ENCODE measurements at regions of chr3 and their contacts with region 1.

Region 1: GRCh38 chr3:188749010-188749617 is 422.7 kb upstream of the TPRG1 start:
- DNase-seq: no peak
- ATAC-seq: no peak
- H3K4me3 Mint-ChIP-seq: no peak overlapping the region
- H3K27ac Mint-ChIP-seq: peak overlapping the region; percentile 55
- H3K4me1 Mint-ChIP-seq: peaks cover 43% of the 10 kb centered on the region
- H3K27me3 Mint-ChIP-seq: no peaks in the 10 kb centered on the region
- CTCF ChIP-seq: no peak

Region 2: GRCh38 chr3:187919048-187919447 is 830.1 kb before region 1 on chr3:
- CTCF ChIA-PET with region 1: no interaction called
- POLR2A ChIA-PET with region 1: no interaction called
- intact Hi-C with region 1: loop called (anchors 2 kb)
- DNase-seq: peak; percentile 36
- ATAC-seq: peak; percentile 89
- H3K4me3 Mint-ChIP-seq: peak overlapping the region; percentile 77
- H3K27ac Mint-ChIP-seq: peak overlapping the region; percentile 86
- H3K4me1 Mint-ChIP-seq: peaks cover 32% of the 10 kb centered on the region
- H3K27me3 Mint-ChIP-seq: peaks cover 15% of the 10 kb centered on the region
- CTCF ChIP-seq: no peak

Region 3: GRCh38 chr3:188244395-188244861 is 504.7 kb before region 1 on chr3:
- CTCF ChIA-PET with region 1: no interaction called
- POLR2A ChIA-PET with region 1: no interaction called
- intact Hi-C with region 1: loop called (anchors 5 kb)
- DNase-seq: no peak
- ATAC-seq: peak; percentile 78
- H3K4me3 Mint-ChIP-seq: peak overlapping the region; percentile 24
- H3K27ac Mint-ChIP-seq: peak overlapping the region; percentile 62
- H3K4me1 Mint-ChIP-seq: peaks cover 74% of the 10 kb centered on the region
- H3K27me3 Mint-ChIP-seq: no peaks in the 10 kb centered on the region
- CTCF ChIP-seq: no peak

Region 4: GRCh38 chr3:188389711-188390342 is 359.3 kb before region 1 on chr3:
- CTCF ChIA-PET with region 1: no interaction called
- POLR2A ChIA-PET with region 1: interaction called, 3 read pairs
- intact Hi-C with region 1: loop called (anchors 1 kb)
- DNase-seq: peak; percentile 29
- ATAC-seq: peak; percentile 84
- H3K4me3 Mint-ChIP-seq: peak overlapping the region; percentile 65
- H3K27ac Mint-ChIP-seq: peak overlapping the region; percentile 98
- H3K4me1 Mint-ChIP-seq: peaks cover 87% of the 10 kb centered on the region
- H3K27me3 Mint-ChIP-seq: no peaks in the 10 kb centered on the region
- CTCF ChIP-seq: no peak

Region 5: GRCh38 chr3:188400494-188401243 is 348.4 kb before region 1 on chr3:
- CTCF ChIA-PET with region 1: no interaction called
- POLR2A ChIA-PET with region 1: interaction called, 3 read pairs
- intact Hi-C with region 1: loop called (anchors 5 kb)
- DNase-seq: no peak
- ATAC-seq: peak; percentile 82
- H3K4me3 Mint-ChIP-seq: peak overlapping the region; percentile 56
- H3K27ac Mint-ChIP-seq: peak overlapping the region; percentile 91
- H3K4me1 Mint-ChIP-seq: peaks cover 93% of the 10 kb centered on the region
- H3K27me3 Mint-ChIP-seq: no peaks in the 10 kb centered on the region
- CTCF ChIP-seq: no peak

Region 6: DNA sequence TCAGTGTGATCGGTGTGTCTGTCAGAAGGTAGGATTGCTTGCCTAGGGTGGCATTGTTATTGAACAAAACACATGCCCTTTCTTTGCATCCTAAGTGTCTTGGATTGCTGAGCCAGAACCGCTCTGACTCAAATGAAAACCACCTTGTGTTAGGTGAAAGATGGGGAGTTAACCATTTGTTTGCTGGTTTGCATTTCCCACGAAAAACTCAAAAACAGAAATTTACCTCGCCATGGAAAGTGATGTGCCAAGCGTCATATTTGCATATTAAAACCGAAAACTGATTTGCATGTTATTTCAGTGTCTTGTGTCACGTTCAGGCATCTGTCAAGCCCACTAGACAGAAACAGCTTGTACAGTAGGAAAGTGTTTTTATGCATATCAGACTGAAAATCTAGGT is 52.0 kb before region 1 on chr3:
- CTCF ChIA-PET with region 1: interaction called, 3 read pairs
- POLR2A ChIA-PET with region 1: interaction called, 38 read pairs
- intact Hi-C with region 1: loop called (anchors 1 kb)
- DNase-seq: no peak
- ATAC-seq: peak; percentile 80
- H3K4me3 Mint-ChIP-seq: peak overlapping the region; percentile 20
- H3K27ac Mint-ChIP-seq: peak overlapping the region; percentile 86
- H3K4me1 Mint-ChIP-seq: peaks cover 72% of the 10 kb centered on the region
- H3K27me3 Mint-ChIP-seq: no peaks in the 10 kb centered on the region
- CTCF ChIP-seq: no peak

Region 7: GRCh38 chr3:188780193-188781147 is 31.4 kb after region 1 on chr3:
- CTCF ChIA-PET with region 1: no interaction called
- POLR2A ChIA-PET with region 1: no interaction called
- intact Hi-C with region 1: no loop called
- DNase-seq: no peak
- ATAC-seq: no peak
- H3K4me3 Mint-ChIP-seq: no peak overlapping the region
- H3K27ac Mint-ChIP-seq: no peak overlapping the region
- H3K4me1 Mint-ChIP-seq: peaks cover 4% of the 10 kb centered on the region
- H3K27me3 Mint-ChIP-seq: no peaks in the 10 kb centered on the region
- CTCF ChIP-seq: no peak

Region 8: GRCh38 chr3:188853856-188854771 is 105.0 kb after region 1 on chr3:
- CTCF ChIA-PET with region 1: no interaction called
- POLR2A ChIA-PET with region 1: no interaction called
- intact Hi-C with region 1: no loop called
- DNase-seq: no peak
- ATAC-seq: no peak
- H3K4me3 Mint-ChIP-seq: no peak overlapping the region
- H3K27ac Mint-ChIP-seq: no peak overlapping the region
- H3K4me1 Mint-ChIP-seq: no peaks in the 10 kb centered on the region
- H3K27me3 Mint-ChIP-seq: no peaks in the 10 kb centered on the region
- CTCF ChIP-seq: no peak

Region 9: GRCh38 chr3:188947401-188948280 is 198.5 kb after region 1 on chr3:
- CTCF ChIA-PET with region 1: no interaction called
- POLR2A ChIA-PET with region 1: interaction called, 15 read pairs
- intact Hi-C with region 1: loop called (anchors 1 kb)
- DNase-seq: no peak
- ATAC-seq: peak; percentile 19
- H3K4me3 Mint-ChIP-seq: peak overlapping the region; percentile 70
- H3K27ac Mint-ChIP-seq: no peak overlapping the region
- H3K4me1 Mint-ChIP-seq: peaks cover 43% of the 10 kb centered on the region
- H3K27me3 Mint-ChIP-seq: peaks cover 13% of the 10 kb centered on the region
- CTCF ChIP-seq: no peak